WTC11 (cell line): ENCODE measurements at regions of chr12 and their contacts with region 1.

Region 1: DNA sequence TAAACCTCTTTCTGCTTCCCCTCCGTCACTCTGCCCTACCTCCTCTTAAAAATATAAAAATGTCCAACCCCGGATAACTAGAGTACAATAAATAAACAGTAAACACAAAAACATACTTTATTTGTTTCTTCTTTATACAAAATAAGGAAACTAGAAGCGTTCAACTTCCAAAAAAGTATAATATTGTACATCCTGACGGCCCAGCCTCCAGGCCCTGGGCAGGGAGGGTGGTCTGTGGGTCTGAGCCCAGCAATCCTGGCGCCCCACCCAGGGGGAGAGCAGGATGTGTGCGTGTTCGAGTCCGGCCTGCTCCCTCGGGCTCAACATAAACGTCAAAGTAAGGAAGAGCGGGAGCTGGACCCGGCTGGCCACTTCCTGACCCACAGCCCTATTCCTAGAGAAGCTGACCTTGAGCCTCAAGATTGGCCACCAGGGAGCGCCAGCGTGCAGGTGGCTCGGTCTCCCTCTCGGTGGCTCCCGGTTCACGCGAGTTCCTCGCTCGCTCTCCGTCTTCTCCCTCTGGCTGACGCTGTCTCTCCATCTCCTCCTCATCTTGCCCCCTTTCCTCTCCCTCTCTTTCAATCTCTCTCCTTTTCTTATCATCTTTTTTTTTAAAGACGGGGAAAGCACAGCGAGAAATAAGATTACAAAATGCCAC is 9.4 kb downstream of the LHX5 start:
- DNase-seq: peak; percentile 89
- ATAC-seq: peak; percentile 12
- H3K4me3 Mint-ChIP-seq: peak overlapping the region; percentile 75
- H3K27ac Mint-ChIP-seq: no peak overlapping the region
- H3K4me1 Mint-ChIP-seq: peaks cover 35% of the 10 kb centered on the region
- H3K27me3 Mint-ChIP-seq: peaks cover 78% of the 10 kb centered on the region
- CTCF ChIP-seq: peak; percentile 81; the same call in 1 of the 2 replicates

Region 2: DNA sequence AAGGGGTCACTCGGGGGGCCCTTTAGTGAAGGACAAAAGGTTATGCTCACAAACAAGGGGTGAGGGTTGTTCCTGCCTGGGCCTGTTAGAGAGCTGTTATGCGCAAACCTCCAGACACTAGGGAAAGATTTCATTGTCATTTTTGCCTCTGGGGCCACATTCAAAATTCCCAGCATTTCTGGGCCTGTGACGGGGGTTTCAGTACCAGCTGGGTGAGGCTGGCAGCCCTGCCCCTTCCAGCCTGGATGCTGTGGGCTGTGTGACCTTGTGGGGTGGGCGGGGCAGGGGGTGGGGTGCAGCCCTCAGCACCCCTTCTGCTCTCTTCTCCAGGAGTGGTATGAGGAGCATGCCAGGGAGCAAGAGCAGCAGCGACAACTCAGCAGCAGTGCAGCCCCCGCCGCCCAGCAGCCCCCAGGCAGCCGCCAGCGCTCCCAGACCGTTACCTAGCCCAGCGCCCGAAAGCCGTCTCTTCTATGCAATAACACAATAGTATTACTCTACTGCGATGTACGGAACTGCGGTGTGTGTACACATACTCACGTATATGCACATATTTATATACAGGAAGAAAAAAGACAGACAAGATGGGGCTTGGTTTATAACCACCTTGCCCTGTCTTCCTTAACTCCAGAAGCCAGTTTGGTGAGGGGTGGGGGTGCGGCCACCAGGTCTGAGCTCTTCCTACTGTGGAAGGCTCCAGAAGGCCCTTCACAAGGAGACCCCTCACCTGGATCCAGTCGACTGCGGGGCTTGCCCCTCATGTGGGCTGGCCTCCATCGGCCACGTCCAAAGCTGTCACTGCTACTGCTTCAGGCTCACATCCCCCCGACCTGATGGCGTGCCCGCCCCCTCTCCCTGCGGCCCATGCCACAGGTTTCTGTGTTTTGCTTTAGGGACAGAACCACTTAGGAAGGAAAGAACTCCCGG is 166.4 kb before region 1 on chr12:
- CTCF ChIA-PET with region 1: no interaction called
- POLR2A ChIA-PET with region 1: no interaction called
- DNase-seq: no peak
- ATAC-seq: no peak
- H3K4me3 Mint-ChIP-seq: no peak overlapping the region
- H3K27ac Mint-ChIP-seq: 0 out of 2 replicates have a peak overlapping the region, but pooled peaks have one; percentile 53
- H3K4me1 Mint-ChIP-seq: peaks cover 14% of the 10 kb centered on the region
- H3K27me3 Mint-ChIP-seq: no peaks in the 10 kb centered on the region
- CTCF ChIP-seq: no peak

Region 3: GRCh38 chr12:113392988-113393579 is 69.2 kb before region 1 on chr12:
- CTCF ChIA-PET with region 1: no interaction called
- POLR2A ChIA-PET with region 1: no interaction called
- DNase-seq: peak; percentile 94
- ATAC-seq: peak; percentile 98
- H3K4me3 Mint-ChIP-seq: no peak overlapping the region
- H3K27ac Mint-ChIP-seq: no peak overlapping the region
- H3K4me1 Mint-ChIP-seq: peaks cover 3% of the 10 kb centered on the region; the same call in 1 of the 2 replicates
- H3K27me3 Mint-ChIP-seq: peaks cover 3% of the 10 kb centered on the region; the same call in 1 of the 2 replicates
- CTCF ChIP-seq: no peak

Region 4: DNA sequence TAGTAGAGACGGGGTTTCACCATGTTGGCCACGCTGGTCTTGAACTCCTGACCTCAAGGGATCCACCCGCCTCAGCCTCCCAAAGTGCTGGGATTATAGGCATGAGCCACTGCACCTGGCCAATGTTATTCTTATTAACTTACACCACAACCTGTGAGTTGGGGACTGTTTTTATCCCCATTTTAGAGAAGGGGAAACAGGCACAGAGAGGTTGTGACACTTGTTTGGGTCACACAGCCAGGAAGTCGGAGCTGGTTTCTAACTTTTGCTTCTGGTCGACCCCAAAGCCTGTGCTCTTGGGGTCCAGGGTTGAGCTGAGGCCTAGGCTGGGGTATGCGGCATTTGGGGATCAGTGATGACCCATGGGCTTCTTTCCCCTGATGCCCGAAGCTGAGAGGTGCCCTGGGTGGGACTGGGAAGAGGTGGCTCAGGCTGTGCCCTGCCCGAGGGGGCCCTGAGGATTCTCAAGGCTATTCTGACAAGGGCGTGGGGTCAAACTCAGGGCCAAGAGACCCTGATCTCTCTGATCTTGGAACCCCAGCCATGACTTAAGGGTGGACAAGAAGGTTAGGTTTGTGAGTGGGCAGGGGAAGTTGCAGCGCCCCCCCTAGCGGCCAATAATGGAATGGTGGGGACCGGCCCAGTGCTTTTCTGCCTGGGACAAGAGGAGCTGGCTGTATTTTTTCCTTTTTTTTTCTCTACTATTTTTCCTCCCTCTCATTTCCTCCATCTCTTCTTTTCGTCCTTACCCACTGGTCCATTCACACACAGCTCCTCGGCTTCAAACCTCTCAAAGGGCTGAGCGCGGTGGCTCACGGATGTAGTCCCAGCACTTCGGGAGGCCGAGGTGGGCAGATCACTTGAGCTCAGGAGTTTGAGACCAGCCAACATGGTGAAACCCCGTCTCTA is 37.1 kb before region 1 on chr12:
- CTCF ChIA-PET with region 1: interaction called, 17 read pairs
- POLR2A ChIA-PET with region 1: no interaction called
- DNase-seq: peak; percentile 80
- ATAC-seq: peak; percentile 67
- H3K4me3 Mint-ChIP-seq: peak overlapping the region; percentile 75
- H3K27ac Mint-ChIP-seq: peak overlapping the region; percentile 93
- H3K4me1 Mint-ChIP-seq: peaks cover 16% of the 10 kb centered on the region
- H3K27me3 Mint-ChIP-seq: no peaks in the 10 kb centered on the region; the same call in 1 of the 2 replicates
- CTCF ChIP-seq: peak; percentile 94

Region 5: GRCh38 chr12:113479590-113480335 is 17.5 kb after region 1 on chr12:
- CTCF ChIA-PET with region 1: interaction called, 92 read pairs
- POLR2A ChIA-PET with region 1: interaction called, 3 read pairs
- DNase-seq: peak; percentile 91
- ATAC-seq: peak; percentile 19
- H3K4me3 Mint-ChIP-seq: peak overlapping the region; percentile 76
- H3K27ac Mint-ChIP-seq: no peak overlapping the region
- H3K4me1 Mint-ChIP-seq: peaks cover 74% of the 10 kb centered on the region
- H3K27me3 Mint-ChIP-seq: peaks cover 93% of the 10 kb centered on the region
- CTCF ChIP-seq: no peak

Region 6: DNA sequence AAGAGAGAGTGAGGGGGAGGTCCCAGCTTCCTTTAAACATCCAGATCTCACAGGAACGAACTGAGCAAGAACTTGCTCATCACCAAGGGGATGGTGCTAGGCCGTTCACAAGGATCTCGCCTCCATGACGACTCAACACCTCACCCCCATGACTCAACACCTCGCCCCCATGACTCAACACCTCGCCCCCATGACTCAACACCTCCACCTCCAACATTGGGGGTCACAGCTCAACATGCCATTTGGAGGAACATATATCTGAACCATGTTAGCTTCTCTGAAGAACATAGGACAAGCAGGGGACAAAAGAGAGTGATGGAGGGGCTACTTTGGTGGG is 75.5 kb after region 1 on chr12:
- CTCF ChIA-PET with region 1: interaction called, 11 read pairs
- POLR2A ChIA-PET with region 1: no interaction called
- DNase-seq: no peak
- ATAC-seq: no peak
- H3K4me3 Mint-ChIP-seq: no peak overlapping the region
- H3K27ac Mint-ChIP-seq: no peak overlapping the region
- H3K4me1 Mint-ChIP-seq: peaks cover 6% of the 10 kb centered on the region
- H3K27me3 Mint-ChIP-seq: peaks cover 15% of the 10 kb centered on the region
- CTCF ChIP-seq: no peak

Region 7: DNA sequence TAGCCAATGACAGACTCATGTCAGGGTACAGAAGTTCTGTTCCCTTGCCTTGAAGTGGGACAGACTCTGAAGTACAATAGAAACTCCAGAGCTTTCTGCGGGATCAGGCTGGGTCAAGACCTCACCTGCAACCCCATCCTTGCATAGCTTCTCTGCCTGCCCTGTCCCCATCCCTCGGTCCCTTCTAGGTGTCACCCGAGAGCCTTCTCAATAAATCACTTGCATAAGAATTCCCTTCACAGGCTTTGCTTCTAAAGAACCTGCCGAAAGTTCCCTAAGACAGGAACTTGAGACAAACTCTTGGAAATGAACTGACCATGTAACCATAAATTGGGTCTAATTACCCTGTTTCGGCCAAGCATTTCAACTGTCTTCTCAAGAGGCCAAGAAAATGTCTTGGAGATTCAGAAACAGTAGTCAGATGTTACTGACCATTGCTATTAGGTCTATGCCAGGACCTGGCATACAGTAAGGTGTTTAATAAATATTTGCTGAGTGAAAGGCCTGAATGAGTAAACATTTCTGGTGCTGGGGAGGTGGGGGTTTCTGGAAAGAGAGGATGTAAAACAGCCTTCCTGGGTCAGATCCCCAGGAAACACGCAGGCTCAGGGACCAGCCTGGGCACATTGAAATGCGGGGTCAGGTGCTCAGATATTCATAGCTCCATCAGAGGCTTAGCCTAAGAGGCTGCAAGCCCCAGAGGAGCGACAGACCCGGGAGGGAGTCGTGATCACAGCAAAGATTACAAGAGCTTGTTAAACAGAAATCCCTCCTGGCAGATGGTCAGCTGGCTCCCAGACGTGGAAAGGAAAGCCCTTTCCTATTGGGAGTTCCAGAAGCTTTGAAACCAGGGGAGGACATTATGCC is 235.6 kb after region 1 on chr12:
- CTCF ChIA-PET with region 1: interaction called, 12 read pairs
- POLR2A ChIA-PET with region 1: no interaction called
- DNase-seq: no peak
- ATAC-seq: peak; percentile 69
- H3K4me3 Mint-ChIP-seq: peak overlapping the region; percentile 16; the same call in 1 of the 2 replicates
- H3K27ac Mint-ChIP-seq: no peak overlapping the region
- H3K4me1 Mint-ChIP-seq: peaks cover 23% of the 10 kb centered on the region
- H3K27me3 Mint-ChIP-seq: peaks cover 10% of the 10 kb centered on the region
- CTCF ChIP-seq: no peak

Region 8: DNA sequence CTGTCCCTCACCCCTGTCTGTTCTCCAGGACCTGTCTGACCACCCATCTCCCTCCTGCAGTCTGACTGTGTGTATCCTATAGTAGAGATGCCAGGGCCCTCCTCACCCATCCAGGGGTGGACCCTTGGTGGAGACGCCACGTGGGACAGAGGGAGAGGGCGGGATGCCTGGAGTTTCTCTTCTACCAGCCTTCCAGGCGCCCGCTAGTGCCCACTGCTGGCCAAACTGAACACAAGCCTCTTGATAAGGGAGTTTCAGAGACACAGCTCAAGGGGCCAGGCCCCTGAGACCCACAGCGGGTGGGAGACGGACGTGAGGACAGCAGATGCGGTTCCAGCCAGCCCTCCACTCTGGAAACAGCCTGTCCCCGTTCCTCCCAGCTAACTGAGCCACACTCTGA is 356.6 kb after region 1 on chr12:
- CTCF ChIA-PET with region 1: interaction called, 19 read pairs
- POLR2A ChIA-PET with region 1: no interaction called
- DNase-seq: peak; percentile 82
- ATAC-seq: peak; percentile 75
- H3K4me3 Mint-ChIP-seq: no peak overlapping the region
- H3K27ac Mint-ChIP-seq: no peak overlapping the region
- H3K4me1 Mint-ChIP-seq: peaks cover 12% of the 10 kb centered on the region
- H3K27me3 Mint-ChIP-seq: no peaks in the 10 kb centered on the region
- CTCF ChIP-seq: peak; percentile 60